K562 (cell line): ENCODE measurements at regions of chr11 and their contacts with region 1.

Region 1: GRCh38 chr11:113532697-113533424 is 57.7 kb upstream of the DRD2 start:
- DNase-seq: peak; percentile 65 to 79 (median 70)
- ATAC-seq: peak; percentile 93
- H3K4me3 ChIP-seq: no peak overlapping the region
- H3K27ac ChIP-seq: no peak overlapping the region
- H3K4me1 ChIP-seq: no peaks in the 10 kb centered on the region; a peak in 1 of 5 replicates
- H3K27me3 ChIP-seq: peaks cover 7 to 12% of the 10 kb centered on the region in 2 experiments; a peak in 4 of 5 replicates
- CTCF ChIP-seq: peak; percentile 79 to 87 (median 84)
- EP300 ChIP-seq: no peak
- POLR2A ChIP-seq: no peak
- RAD21 ChIP-seq: peak; percentile 73 to 79

Region 2: GRCh38 chr11:113314389-113315301 is 218.2 kb before region 1 on chr11 and contains the start of gene TTC12:
- CTCF ChIA-PET with region 1: no interaction called
- POLR2A ChIA-PET with region 1: no interaction called
- in situ Hi-C with region 1: loop called (anchors 25 kb)
- intact Hi-C with region 1: no loop called
- DNase-seq: peak; percentile 94 to 98 (median 96)
- ATAC-seq: peak; percentile 100
- H3K4me3 ChIP-seq: peak within 1 kb of the TSS; percentile 83
- H3K27ac ChIP-seq: peak within 1 kb of the TSS; percentile 47
- H3K4me1 ChIP-seq: peaks cover 5 to 8% of the 10 kb centered on the region in 2 experiments; a peak in 4 of 5 replicates
- H3K27me3 ChIP-seq: no peaks in the 10 kb centered on the region
- CTCF ChIP-seq: no peak
- EP300 ChIP-seq: no peak
- POLR2A ChIP-seq: peak; percentile 72
- RAD21 ChIP-seq: no peak
- polyA plus RNA-seq, gene TTC12: 5.1 to 9.1 TPM

Region 3: DNA sequence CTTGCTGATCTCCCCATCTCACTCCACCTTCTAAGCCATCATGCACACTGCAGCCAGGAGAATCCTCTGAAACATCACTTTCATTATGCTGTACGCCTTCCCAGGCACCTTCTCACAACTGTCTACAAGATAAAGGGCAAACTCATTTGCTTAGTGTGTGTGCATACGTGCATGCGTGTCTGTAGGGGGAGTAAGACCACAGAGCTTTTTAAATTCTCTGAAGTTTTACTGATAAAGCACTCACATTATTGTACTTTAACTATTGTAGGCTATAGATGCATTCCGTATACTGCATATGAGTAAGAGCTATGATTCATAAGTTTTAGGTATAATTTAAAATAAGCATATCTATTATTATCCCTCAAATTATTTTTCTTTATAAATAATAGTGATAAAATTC is 160.6 kb before region 1 on chr11:
- CTCF ChIA-PET with region 1: no interaction called
- POLR2A ChIA-PET with region 1: no interaction called
- in situ Hi-C with region 1: no loop called
- intact Hi-C with region 1: loop called (anchors 1 kb)
- DNase-seq: peak in 2 of 4 experiments; percentile 11 to 25
- ATAC-seq: peak; percentile 71
- H3K4me3 ChIP-seq: no peak overlapping the region
- H3K27ac ChIP-seq: no peak overlapping the region
- H3K4me1 ChIP-seq: peaks cover 0 to 8% of the 10 kb centered on the region in 2 experiments; a peak in 3 of 5 replicates
- H3K27me3 ChIP-seq: peaks cover 0 to 21% of the 10 kb centered on the region in 2 experiments; a peak in 2 of 5 replicates
- CTCF ChIP-seq: peak in 2 of 3 experiments; percentile 11 to 35; a peak in 3 of 6 replicates
- EP300 ChIP-seq: no peak
- POLR2A ChIP-seq: no peak
- RAD21 ChIP-seq: peak in 1 of 2 experiments; percentile 37; a peak in 2 of 4 replicates